ENCODE measurements at regions of chr18 and their contacts with region 1.

Region 1: GRCh38 chr18:30674596-30674995 is 367.9 kb downstream of the DSC3 start:
- DNase-seq: no peak
- ATAC-seq: no peak
- H3K4me3 ChIP-seq: no peak overlapping the region
- H3K4me3 Mint-ChIP-seq: no peak overlapping the region
- H3K27ac ChIP-seq: no peak overlapping the region
- H3K27ac Mint-ChIP-seq: no peak overlapping the region
- H3K4me1 ChIP-seq: no peaks in the 10 kb centered on the region
- H3K4me1 Mint-ChIP-seq: no peaks in the 10 kb centered on the region
- H3K27me3 ChIP-seq: no peaks in the 10 kb centered on the region
- H3K27me3 Mint-ChIP-seq: no peaks in the 10 kb centered on the region

Region 2: DNA sequence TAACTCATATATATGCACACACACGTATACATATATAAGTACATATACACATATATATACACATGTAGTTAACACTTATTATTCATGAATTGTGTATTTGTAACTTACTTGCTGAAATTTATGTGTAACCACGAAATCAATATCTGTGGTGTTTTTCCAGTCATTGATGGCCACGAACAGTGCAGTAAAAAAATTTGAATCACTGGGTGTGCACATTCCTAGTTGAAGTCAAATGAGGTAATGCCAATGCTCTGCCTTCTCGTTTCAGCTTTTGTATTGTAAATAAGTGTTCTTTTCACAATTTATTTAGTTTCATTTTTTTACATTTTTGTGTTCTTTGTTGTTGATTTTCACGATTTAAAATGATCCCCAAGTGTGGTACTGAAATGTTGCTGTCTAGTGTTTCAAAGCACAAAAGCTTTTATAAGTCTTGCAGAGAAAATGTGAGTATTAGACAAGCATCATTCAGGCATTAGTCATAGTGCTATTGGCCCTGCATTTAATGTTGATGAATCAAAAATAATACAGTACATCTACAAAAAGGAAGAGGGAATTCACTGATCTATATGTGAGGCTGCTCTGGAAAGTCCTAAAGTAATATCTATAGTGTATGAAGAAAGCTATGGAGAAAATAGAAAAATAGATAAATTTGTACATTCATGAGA is 51.1 kb before region 1 on chr18:
- CTCF ChIA-PET with region 1: no interaction called
- POLR2A ChIA-PET with region 1: no interaction called
- intact Hi-C with region 1: loop called in 1 of 2 experiments (anchors 5 kb)
- DNase-seq: no peak
- ATAC-seq: no peak
- H3K4me3 ChIP-seq: no peak overlapping the region
- H3K4me3 Mint-ChIP-seq: no peak overlapping the region
- H3K27ac ChIP-seq: no peak overlapping the region
- H3K27ac Mint-ChIP-seq: no peak overlapping the region
- H3K4me1 ChIP-seq: no peaks in the 10 kb centered on the region
- H3K4me1 Mint-ChIP-seq: no peaks in the 10 kb centered on the region
- H3K27me3 ChIP-seq: no peaks in the 10 kb centered on the region
- H3K27me3 Mint-ChIP-seq: no peaks in the 10 kb centered on the region